ENCODE measurements at regions of chr2 and their contacts with region 1.

Region 1: GRCh38 chr2:207499114-207499513 is 30.6 kb upstream of the CREB1 start:
- DNase-seq: peak; percentile 23
- H3K4me3 ChIP-seq: no peak overlapping the region
- H3K27ac ChIP-seq: no peak overlapping the region
- H3K4me1 ChIP-seq: peaks cover 3% of the 10 kb centered on the region
- H3K27me3 ChIP-seq: no peaks in the 10 kb centered on the region
- CTCF ChIP-seq: no peak
- POLR2A ChIP-seq: no peak

Region 2: GRCh38 chr2:207484444-207485391 is 14.4 kb before region 1 on chr2:
- CTCF ChIA-PET with region 1: interaction called, 4 read pairs
- POLR2A ChIA-PET with region 1: no interaction called
- dilution Hi-C with region 1: no loop called
- intact Hi-C with region 1: loop called (anchors 1 kb)
- DNase-seq: no peak
- H3K4me3 ChIP-seq: no peak overlapping the region
- H3K27ac ChIP-seq: no peak overlapping the region
- H3K4me1 ChIP-seq: no peaks in the 10 kb centered on the region
- H3K27me3 ChIP-seq: no peaks in the 10 kb centered on the region
- CTCF ChIP-seq: no peak
- POLR2A ChIP-seq: no peak

Measured in endothelial cell of umbilical vein (primary cell).